Activated naive CD4-positive, alpha-beta T cell treated with anti-CD3 and anti-CD28 coated beads, Interleukin-2, amount 10 ng/mL, durations not matched to agents 7 days and 5 days (primary cell): ENCODE measurements at regions of chr19 and their contacts with region 1.

Region 1: GRCh38 chr19:45059278-45059965 is 16.9 kb downstream of the ZNF296 start:
- DNase-seq: peak; percentile 91
- H3K4me3 Mint-ChIP-seq: no peak overlapping the region
- H3K27ac Mint-ChIP-seq: peak overlapping the region; percentile 55
- H3K4me1 Mint-ChIP-seq: peaks cover 2% of the 10 kb centered on the region
- H3K27me3 Mint-ChIP-seq: no peaks in the 10 kb centered on the region

Region 2: DNA sequence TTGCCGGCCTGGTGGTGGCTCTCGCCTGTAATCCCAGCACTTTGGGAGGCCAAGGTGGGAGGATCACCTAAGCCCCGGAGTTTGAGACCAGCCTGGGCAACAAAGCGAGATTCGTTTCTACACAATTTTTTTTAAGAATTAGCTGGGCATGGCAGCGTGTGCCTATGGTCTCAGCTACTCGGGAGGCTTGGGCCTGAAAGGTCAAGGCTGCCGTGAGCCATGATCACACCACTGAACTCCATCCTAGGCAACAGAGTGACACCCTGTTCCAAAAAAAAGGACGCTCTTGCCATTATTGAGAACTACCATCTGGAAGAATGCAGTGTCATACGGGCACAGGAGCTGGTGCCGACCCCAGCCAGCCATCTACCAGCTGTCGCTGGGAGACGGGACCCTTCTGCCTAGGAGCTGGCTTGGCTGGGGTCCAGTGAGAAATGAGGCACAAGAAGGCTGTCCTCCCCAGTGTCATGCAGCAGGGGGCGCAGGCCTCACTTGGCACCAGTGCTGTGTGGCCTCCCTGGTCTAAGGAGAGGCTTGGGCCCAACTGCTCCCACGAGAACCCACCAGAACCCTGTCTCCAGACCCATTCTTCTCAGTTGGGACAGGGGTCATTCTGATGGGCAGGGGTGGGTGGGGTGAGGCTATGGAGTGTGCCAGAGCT is 70.4 kb before region 1 on chr19:
- CTCF ChIA-PET with region 1: interaction called, 19 read pairs
- DNase-seq: peak; percentile 75
- H3K4me3 Mint-ChIP-seq: no peak overlapping the region
- H3K27ac Mint-ChIP-seq: peak overlapping the region; percentile 11
- H3K4me1 Mint-ChIP-seq: peaks cover 2% of the 10 kb centered on the region
- H3K27me3 Mint-ChIP-seq: no peaks in the 10 kb centered on the region

Region 3: GRCh38 chr19:45038931-45039893 is 20.2 kb before region 1 on chr19 and contains the start of gene CLASRP:
- CTCF ChIA-PET with region 1: interaction called, 22 read pairs
- DNase-seq: peak; percentile 92
- H3K4me3 Mint-ChIP-seq: peak within 1 kb of the TSS; percentile 99
- H3K27ac Mint-ChIP-seq: peak within 1 kb of the TSS; percentile 99
- H3K4me1 Mint-ChIP-seq: peaks cover 35% of the 10 kb centered on the region
- H3K27me3 Mint-ChIP-seq: no peaks in the 10 kb centered on the region

Region 4: GRCh38 chr19:45045671-45046353 is 13.6 kb before region 1 on chr19:
- CTCF ChIA-PET with region 1: interaction called, 22 read pairs
- DNase-seq: no peak
- H3K4me3 Mint-ChIP-seq: no peak overlapping the region
- H3K27ac Mint-ChIP-seq: no peak overlapping the region
- H3K4me1 Mint-ChIP-seq: peaks cover 40% of the 10 kb centered on the region
- H3K27me3 Mint-ChIP-seq: no peaks in the 10 kb centered on the region

Region 5: GRCh38 chr19:45164577-45165335 is 105.3 kb after region 1 on chr19:
- CTCF ChIA-PET with region 1: no interaction called
- DNase-seq: peak; percentile 75
- H3K4me3 Mint-ChIP-seq: no peak overlapping the region
- H3K27ac Mint-ChIP-seq: peak overlapping the region; percentile 42
- H3K4me1 Mint-ChIP-seq: peaks cover 43% of the 10 kb centered on the region
- H3K27me3 Mint-ChIP-seq: peaks cover 26% of the 10 kb centered on the region